Activated naive CD4-positive, alpha-beta T cell treated with anti-CD3 and anti-CD28 coated beads for 36 hours (primary cell): ENCODE measurements at regions of chr9 and their contacts with region 1.

Region 1: GRCh38 chr9:114988962-114989599 is 58.7 kb upstream of the TNFSF8 start:
- DNase-seq: peak; percentile 74
- H3K4me3 Mint-ChIP-seq: peak overlapping the region; percentile 47
- H3K27ac Mint-ChIP-seq: peak overlapping the region; percentile 96
- H3K4me1 Mint-ChIP-seq: peaks cover 61% of the 10 kb centered on the region
- H3K27me3 Mint-ChIP-seq: no peaks in the 10 kb centered on the region

Region 2: GRCh38 chr9:114385412-114386181 is 603.5 kb before region 1 on chr9:
- CTCF ChIA-PET with region 1: no interaction called
- intact Hi-C with region 1: loop called (anchors 5 kb)
- DNase-seq: peak; percentile 97
- H3K4me3 Mint-ChIP-seq: peak overlapping the region; percentile 97
- H3K27ac Mint-ChIP-seq: peak overlapping the region; percentile 100
- H3K4me1 Mint-ChIP-seq: peaks cover 67% of the 10 kb centered on the region
- H3K27me3 Mint-ChIP-seq: no peaks in the 10 kb centered on the region

Region 3: GRCh38 chr9:114718801-114719221 is 270.3 kb before region 1 on chr9:
- CTCF ChIA-PET with region 1: no interaction called
- intact Hi-C with region 1: loop called (anchors 1 kb)
- DNase-seq: peak; percentile 97
- H3K4me3 Mint-ChIP-seq: peak overlapping the region; percentile 22
- H3K27ac Mint-ChIP-seq: peak overlapping the region; percentile 81
- H3K4me1 Mint-ChIP-seq: peaks cover 49% of the 10 kb centered on the region
- H3K27me3 Mint-ChIP-seq: peaks cover 5% of the 10 kb centered on the region

Region 4: GRCh38 chr9:114919611-114920010 is 69.5 kb before region 1 on chr9:
- CTCF ChIA-PET with region 1: no interaction called
- intact Hi-C with region 1: loop called (anchors 2 kb)
- DNase-seq: peak; percentile 68
- H3K4me3 Mint-ChIP-seq: peak overlapping the region; percentile 11
- H3K27ac Mint-ChIP-seq: peak overlapping the region; percentile 74
- H3K4me1 Mint-ChIP-seq: peaks cover 88% of the 10 kb centered on the region
- H3K27me3 Mint-ChIP-seq: no peaks in the 10 kb centered on the region

Region 5: DNA sequence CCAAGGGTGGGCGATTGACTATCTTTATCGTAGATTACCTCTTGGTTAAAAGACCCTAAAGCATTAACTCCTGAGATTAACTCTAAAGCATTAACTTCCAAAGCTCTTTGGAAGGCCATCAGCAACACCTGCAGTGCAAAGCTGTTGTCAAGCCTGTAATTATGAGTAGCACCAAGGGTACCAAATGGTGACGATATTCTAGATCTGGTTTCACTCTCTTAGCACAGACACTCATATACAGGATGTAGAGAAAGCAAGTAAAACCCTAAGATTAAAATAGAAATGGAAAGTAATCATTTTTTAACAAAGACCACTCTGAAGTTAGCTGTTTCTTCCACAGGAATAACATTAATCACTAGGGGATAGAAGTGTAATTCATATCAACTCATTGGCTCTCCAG is 28.8 kb before region 1 on chr9:
- CTCF ChIA-PET with region 1: interaction called, 15 read pairs
- intact Hi-C with region 1: loop called (anchors 1 kb)
- DNase-seq: peak; percentile 37
- H3K4me3 Mint-ChIP-seq: no peak overlapping the region
- H3K27ac Mint-ChIP-seq: peak overlapping the region; percentile 73
- H3K4me1 Mint-ChIP-seq: peaks cover 44% of the 10 kb centered on the region
- H3K27me3 Mint-ChIP-seq: no peaks in the 10 kb centered on the region

Region 6: DNA sequence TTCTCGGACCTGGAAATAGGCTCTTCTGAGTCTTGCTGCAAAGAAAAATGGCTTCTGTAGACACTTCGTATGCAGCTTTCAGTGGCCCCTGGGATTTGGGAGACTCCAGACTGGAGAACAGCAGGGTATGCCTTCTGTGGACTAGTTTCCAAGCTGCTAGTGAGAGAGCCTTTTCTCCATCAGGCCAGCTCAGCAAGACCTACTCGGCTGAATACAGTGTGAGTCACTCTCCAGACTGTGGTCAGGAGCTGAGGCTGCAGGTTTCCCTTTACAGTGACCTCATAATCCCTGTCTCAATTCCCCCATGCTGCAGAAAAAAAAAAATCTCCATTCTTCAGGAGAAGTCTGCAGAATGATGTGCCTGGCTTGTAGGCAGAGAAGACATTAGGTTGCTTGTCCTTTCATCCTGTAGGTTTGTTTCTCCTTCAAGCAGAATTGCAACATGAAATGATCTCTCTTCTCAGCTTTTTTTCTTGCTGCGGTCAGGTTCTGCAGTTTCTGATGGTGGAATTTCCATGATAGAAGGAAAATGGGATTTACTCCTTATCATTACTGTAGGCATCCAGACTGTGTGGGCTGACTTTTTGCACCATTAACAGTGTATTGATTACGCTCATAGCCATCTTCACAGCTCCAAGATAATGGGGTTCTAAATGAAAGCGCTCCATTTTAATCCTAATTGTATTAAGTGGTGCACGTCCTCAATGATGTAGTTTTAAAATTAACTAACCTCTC is 19.6 kb after region 1 on chr9:
- CTCF ChIA-PET with region 1: interaction called, 8 read pairs
- intact Hi-C with region 1: loop called (anchors 1 kb)
- DNase-seq: peak; percentile 41
- H3K4me3 Mint-ChIP-seq: no peak overlapping the region
- H3K27ac Mint-ChIP-seq: no peak overlapping the region
- H3K4me1 Mint-ChIP-seq: peaks cover 81% of the 10 kb centered on the region
- H3K27me3 Mint-ChIP-seq: no peaks in the 10 kb centered on the region